ENCODE measurements at regions of chr5 and their contacts with region 1.

Region 1: GRCh38 chr5:178113199-178113787 is at the start of gene N4BP3:
- DNase-seq: peak; percentile 91
- ATAC-seq: peak; percentile 63
- H3K4me3 ChIP-seq: peak within 1 kb of the TSS; percentile 26 to 85 (median 74)
- H3K4me3 Mint-ChIP-seq: peak within 1 kb of the TSS; percentile 94
- H3K27ac ChIP-seq: peak within 1 kb of the TSS; percentile 86 to 89
- H3K27ac Mint-ChIP-seq: peak within 1 kb of the TSS; percentile 93
- H3K4me1 ChIP-seq: peaks cover 55 to 62% of the 10 kb centered on the region in 2 donors
- H3K4me1 Mint-ChIP-seq: peaks cover 66% of the 10 kb centered on the region
- H3K27me3 ChIP-seq: no peaks in the 10 kb centered on the region
- H3K27me3 Mint-ChIP-seq: no peaks in the 10 kb centered on the region
- CTCF ChIP-seq: peak; percentile 25
- total RNA-seq, gene N4BP3: 47.2 and 48.7 TPM in 2 replicates

Region 2: DNA sequence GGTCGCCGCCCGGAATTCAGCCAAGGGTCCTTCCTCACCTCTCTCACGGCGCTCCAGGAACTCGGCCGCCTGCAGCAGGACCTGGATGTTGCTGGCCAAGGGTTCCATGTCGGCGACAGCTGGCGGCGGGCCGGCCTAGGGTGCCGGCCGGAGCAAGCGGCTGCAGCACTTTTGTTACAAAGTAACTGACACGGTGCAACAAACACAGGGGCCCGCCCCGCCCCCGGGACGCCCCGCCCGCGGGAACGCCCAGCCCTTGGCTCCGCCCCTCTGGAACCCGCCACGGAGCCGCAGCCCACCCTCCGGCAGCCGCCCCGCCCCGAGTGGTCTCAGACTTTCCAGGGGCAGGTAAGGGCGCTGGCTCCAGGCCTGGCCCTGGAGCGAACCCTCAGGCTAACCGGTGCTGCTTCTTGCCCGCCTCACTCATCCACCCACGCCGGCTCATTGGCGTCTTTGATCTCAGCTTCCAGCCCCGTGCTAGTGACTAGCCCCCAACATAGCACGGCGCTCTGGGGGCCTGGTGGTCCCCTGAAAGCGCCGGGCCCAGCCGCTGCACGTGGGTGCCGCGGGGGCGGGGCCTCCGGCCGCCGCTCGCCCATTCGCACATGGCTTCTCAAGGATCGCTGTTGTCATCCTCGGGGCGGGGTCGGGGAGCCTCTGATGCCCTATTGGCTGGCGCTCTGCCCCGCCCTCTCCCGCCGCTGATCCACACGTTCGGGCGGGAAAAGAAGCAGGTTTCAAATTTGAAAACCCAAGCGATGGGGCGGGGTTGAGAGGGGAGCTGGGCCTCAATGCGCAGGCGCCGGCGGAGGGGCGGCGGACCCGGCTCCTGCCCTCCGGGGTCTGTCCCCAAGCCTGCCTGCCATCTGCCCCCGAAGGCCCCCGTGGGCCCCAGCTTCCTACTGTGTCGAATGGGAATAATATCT is 801.3 kb before region 1 on chr5 and contains the start of gene MXD3:
- CTCF ChIA-PET with region 1: no interaction called
- POLR2A ChIA-PET with region 1: no interaction called
- intact Hi-C with region 1: loop called (anchors 10 kb)
- DNase-seq: peak; percentile 94
- ATAC-seq: peak; percentile 89
- H3K4me3 ChIP-seq: peak within 1 kb of the TSS; percentile 15 to 80 (median 63)
- H3K4me3 Mint-ChIP-seq: peak within 1 kb of the TSS; percentile 90
- H3K27ac ChIP-seq: peak within 1 kb of the TSS; percentile 27 to 34
- H3K27ac Mint-ChIP-seq: peak within 1 kb of the TSS; percentile 84
- H3K4me1 ChIP-seq: peaks cover 40 to 58% of the 10 kb centered on the region in 2 donors
- H3K4me1 Mint-ChIP-seq: peaks cover 41% of the 10 kb centered on the region
- H3K27me3 ChIP-seq: no peaks in the 10 kb centered on the region
- H3K27me3 Mint-ChIP-seq: no peaks in the 10 kb centered on the region
- CTCF ChIP-seq: no peak
- total RNA-seq, gene MXD3: 10.8 and 11.5 TPM in 2 replicates

Region 3: GRCh38 chr5:178130604-178131485 is 17.6 kb after region 1 on chr5 and contains the start of gene RMND5B:
- CTCF ChIA-PET with region 1: interaction called, 7 read pairs
- POLR2A ChIA-PET with region 1: interaction called, 8 read pairs
- intact Hi-C with region 1: loop called (anchors 1 kb)
- DNase-seq: peak; percentile 92
- ATAC-seq: peak; percentile 87
- H3K4me3 ChIP-seq: peak within 1 kb of the TSS; percentile 17 to 81 (median 78)
- H3K4me3 Mint-ChIP-seq: peak within 1 kb of the TSS; percentile 89
- H3K27ac ChIP-seq: peak within 1 kb of the TSS; percentile 60 to 83
- H3K27ac Mint-ChIP-seq: peak within 1 kb of the TSS; percentile 88
- H3K4me1 ChIP-seq: peaks cover 6 to 16% of the 10 kb centered on the region in 2 donors
- H3K4me1 Mint-ChIP-seq: peaks cover 22% of the 10 kb centered on the region
- H3K27me3 ChIP-seq: no peaks in the 10 kb centered on the region
- H3K27me3 Mint-ChIP-seq: no peaks in the 10 kb centered on the region
- CTCF ChIP-seq: no peak
- total RNA-seq, gene RMND5B: 52.7 and 53.9 TPM in 2 replicates

Region 4: GRCh38 chr5:178476972-178477754 is 363.9 kb after region 1 on chr5:
- CTCF ChIA-PET with region 1: no interaction called
- POLR2A ChIA-PET with region 1: no interaction called
- intact Hi-C with region 1: no loop called
- DNase-seq: no peak
- ATAC-seq: no peak
- H3K4me3 ChIP-seq: no peak overlapping the region
- H3K4me3 Mint-ChIP-seq: no peak overlapping the region
- H3K27ac ChIP-seq: no peak overlapping the region
- H3K27ac Mint-ChIP-seq: no peak overlapping the region
- H3K4me1 ChIP-seq: no peaks in the 10 kb centered on the region
- H3K4me1 Mint-ChIP-seq: no peaks in the 10 kb centered on the region
- H3K27me3 ChIP-seq: no peaks in the 10 kb centered on the region
- H3K27me3 Mint-ChIP-seq: peaks cover 24% of the 10 kb centered on the region
- CTCF ChIP-seq: no peak

Measured in B cell (primary cell).